ENCODE measurements at regions of chr12 and their contacts with region 1.

Region 1: GRCh38 chr12:14769969-14770495 is 33.2 kb downstream of the WBP11 start:
- DNase-seq: peak; percentile 94
- H3K4me3 Mint-ChIP-seq: peak overlapping the region; percentile 98
- H3K27ac Mint-ChIP-seq: peak overlapping the region; percentile 100
- H3K4me1 Mint-ChIP-seq: peaks cover 39% of the 10 kb centered on the region
- H3K27me3 Mint-ChIP-seq: no peaks in the 10 kb centered on the region

Region 2: GRCh38 chr12:14257734-14258574 is 512.1 kb before region 1 on chr12:
- CTCF ChIA-PET with region 1: no interaction called
- POLR2A ChIA-PET with region 1: no interaction called
- intact Hi-C with region 1: loop called (anchors 2 kb)
- DNase-seq: peak; percentile 97
- H3K4me3 Mint-ChIP-seq: peak overlapping the region; percentile 67
- H3K27ac Mint-ChIP-seq: peak overlapping the region; percentile 99
- H3K4me1 Mint-ChIP-seq: peaks cover 45% of the 10 kb centered on the region
- H3K27me3 Mint-ChIP-seq: no peaks in the 10 kb centered on the region

Region 3: GRCh38 chr12:14723763-14724162 is 46.3 kb before region 1 on chr12:
- CTCF ChIA-PET with region 1: interaction called, 10 read pairs
- POLR2A ChIA-PET with region 1: no interaction called
- intact Hi-C with region 1: loop called (anchors 2 kb)
- DNase-seq: peak; percentile 65
- H3K4me3 Mint-ChIP-seq: no peak overlapping the region
- H3K27ac Mint-ChIP-seq: no peak overlapping the region
- H3K4me1 Mint-ChIP-seq: no peaks in the 10 kb centered on the region
- H3K27me3 Mint-ChIP-seq: peaks cover 2% of the 10 kb centered on the region

Region 4: GRCh38 chr12:14756334-14757143 is 13.5 kb before region 1 on chr12:
- CTCF ChIA-PET with region 1: no interaction called
- POLR2A ChIA-PET with region 1: no interaction called
- intact Hi-C with region 1: no loop called
- DNase-seq: no peak
- H3K4me3 Mint-ChIP-seq: no peak overlapping the region
- H3K27ac Mint-ChIP-seq: no peak overlapping the region
- H3K4me1 Mint-ChIP-seq: peaks cover 10% of the 10 kb centered on the region
- H3K27me3 Mint-ChIP-seq: no peaks in the 10 kb centered on the region

Region 5: DNA sequence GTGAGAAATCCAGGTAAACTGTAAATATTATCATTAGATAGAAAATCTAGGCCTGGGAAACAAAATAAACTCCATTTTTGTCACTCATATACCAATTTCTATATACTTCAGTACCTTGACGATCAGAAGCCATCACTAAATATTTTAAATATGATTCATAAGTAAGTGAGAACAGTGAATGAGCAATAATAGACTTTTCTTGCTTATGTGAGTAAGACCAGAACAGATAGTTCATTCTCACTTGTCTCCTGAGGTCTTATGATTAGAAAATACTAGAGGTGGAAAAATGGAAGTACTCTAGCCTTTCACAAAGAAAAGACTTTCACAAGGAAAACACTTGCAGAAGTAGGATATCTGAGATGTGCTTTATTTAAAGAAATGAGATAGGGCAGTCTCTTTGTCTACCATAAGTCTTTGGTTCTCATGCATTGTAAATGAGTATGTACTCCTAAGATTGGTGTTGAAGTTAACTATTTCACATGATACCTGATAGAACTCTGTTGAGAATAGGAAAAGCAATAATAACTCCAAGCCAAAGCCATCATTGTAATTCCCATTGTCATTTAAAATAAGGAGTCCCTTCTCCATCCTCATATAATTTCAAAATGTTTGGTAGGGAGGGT is 54.1 kb after region 1 on chr12:
- CTCF ChIA-PET with region 1: interaction called, 3 read pairs
- POLR2A ChIA-PET with region 1: no interaction called
- intact Hi-C with region 1: loop called (anchors 2 kb)
- DNase-seq: no peak
- H3K4me3 Mint-ChIP-seq: no peak overlapping the region
- H3K27ac Mint-ChIP-seq: no peak overlapping the region
- H3K4me1 Mint-ChIP-seq: peaks cover 20% of the 10 kb centered on the region
- H3K27me3 Mint-ChIP-seq: peaks cover 2% of the 10 kb centered on the region

Region 6: DNA sequence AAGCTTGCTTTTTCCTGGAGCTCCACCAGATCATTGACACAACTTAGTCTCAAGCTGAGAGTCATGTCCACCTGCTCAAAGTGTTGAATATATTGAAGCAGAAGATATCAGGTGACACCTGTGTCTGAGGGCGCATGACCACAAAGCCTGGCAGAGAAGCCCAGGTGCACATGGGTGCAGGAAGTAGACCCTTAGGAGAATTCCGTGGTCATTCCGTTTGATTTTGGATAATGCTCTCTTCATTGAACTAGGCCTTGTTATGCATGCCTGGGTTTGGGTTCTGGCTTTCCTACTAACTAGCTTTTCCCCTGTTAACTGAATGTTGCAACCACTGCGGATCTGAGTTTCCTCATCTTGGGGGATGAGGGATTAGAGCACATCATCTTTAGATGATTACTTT is 184.2 kb after region 1 on chr12:
- CTCF ChIA-PET with region 1: interaction called, 6 read pairs
- POLR2A ChIA-PET with region 1: interaction called, 17 read pairs
- intact Hi-C with region 1: no loop called
- DNase-seq: no peak
- H3K4me3 Mint-ChIP-seq: peak overlapping the region; percentile 53
- H3K27ac Mint-ChIP-seq: peak overlapping the region; percentile 99
- H3K4me1 Mint-ChIP-seq: peaks cover 64% of the 10 kb centered on the region
- H3K27me3 Mint-ChIP-seq: no peaks in the 10 kb centered on the region

Region 7: DNA sequence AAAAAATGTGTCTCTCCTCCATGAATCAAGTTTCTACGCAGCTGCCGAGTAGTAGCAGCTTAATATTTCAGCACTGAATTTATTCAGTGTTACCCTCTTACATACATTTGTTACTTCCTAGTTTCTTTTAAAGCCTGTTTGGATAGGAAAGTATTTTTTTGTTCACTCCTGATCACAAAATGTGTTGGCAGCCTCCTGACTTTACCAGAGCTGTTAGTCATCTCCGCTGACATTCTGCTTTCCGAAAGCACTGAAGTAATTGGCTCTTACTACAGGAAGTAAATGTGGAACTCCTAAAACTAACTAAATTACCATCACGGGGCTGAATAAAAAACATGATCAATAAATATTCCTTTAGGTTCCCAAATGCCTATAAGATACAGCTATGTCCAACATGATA is 793.6 kb after region 1 on chr12:
- CTCF ChIA-PET with region 1: no interaction called
- POLR2A ChIA-PET with region 1: no interaction called
- intact Hi-C with region 1: loop called (anchors 2 kb)
- DNase-seq: peak; percentile 40
- H3K4me3 Mint-ChIP-seq: peak overlapping the region; percentile 69
- H3K27ac Mint-ChIP-seq: peak overlapping the region; percentile 90
- H3K4me1 Mint-ChIP-seq: peaks cover 58% of the 10 kb centered on the region
- H3K27me3 Mint-ChIP-seq: no peaks in the 10 kb centered on the region